Activated CD4-positive, alpha-beta T cell treated with anti-CD3 and anti-CD28 coated beads for 36 hours (primary cell): ENCODE measurements at regions of chr4 and their contacts with region 1.

Region 1: DNA sequence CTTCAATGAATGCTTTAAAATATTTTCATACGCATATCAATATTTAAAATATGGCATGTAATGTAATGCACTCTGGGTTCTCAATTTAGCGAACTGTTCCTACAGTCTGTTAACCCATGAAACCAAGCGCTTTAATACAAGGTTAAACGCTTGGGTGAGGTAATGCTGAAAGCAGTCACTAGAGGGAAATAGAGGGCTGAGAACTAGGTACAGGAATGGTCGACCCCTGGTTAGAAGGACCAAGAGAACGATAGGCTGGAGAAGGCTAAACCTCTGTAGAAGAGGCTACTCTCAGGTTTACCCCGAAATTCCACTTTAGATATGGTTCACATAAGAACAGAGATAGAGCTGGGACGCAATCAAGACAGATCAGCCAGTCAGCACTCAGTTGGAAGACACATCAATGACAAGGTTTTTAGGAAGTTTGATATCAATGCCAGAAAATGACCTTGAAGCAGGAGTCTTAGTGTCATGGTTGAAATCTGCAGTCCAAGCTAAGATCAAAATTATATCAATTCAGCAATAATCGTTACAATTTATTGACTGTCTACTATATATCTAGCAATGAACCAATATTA is 26.9 kb downstream of the ARSJ start:
- DNase-seq: peak; percentile 30
- ATAC-seq: peak; percentile 83
- H3K4me3 Mint-ChIP-seq: no peak overlapping the region
- H3K27ac Mint-ChIP-seq: no peak overlapping the region
- H3K4me1 Mint-ChIP-seq: peaks cover 4% of the 10 kb centered on the region
- H3K27me3 Mint-ChIP-seq: peaks cover 8% of the 10 kb centered on the region

Region 2: GRCh38 chr4:114077610-114078009 is 125.1 kb after region 1 on chr4:
- CTCF ChIA-PET with region 1: interaction called, 15 read pairs
- POLR2A ChIA-PET with region 1: no interaction called
- intact Hi-C with region 1: no loop called
- DNase-seq: no peak
- ATAC-seq: no peak
- H3K4me3 Mint-ChIP-seq: no peak overlapping the region
- H3K27ac Mint-ChIP-seq: no peak overlapping the region
- H3K4me1 Mint-ChIP-seq: no peaks in the 10 kb centered on the region
- H3K27me3 Mint-ChIP-seq: peaks cover 6% of the 10 kb centered on the region

Region 3: GRCh38 chr4:114180481-114180880 is 227.9 kb after region 1 on chr4:
- CTCF ChIA-PET with region 1: interaction called, 3 read pairs
- POLR2A ChIA-PET with region 1: no interaction called
- intact Hi-C with region 1: loop called (anchors 2 to 5 kb)
- DNase-seq: peak; percentile 60
- ATAC-seq: peak; percentile 53
- H3K4me3 Mint-ChIP-seq: no peak overlapping the region
- H3K27ac Mint-ChIP-seq: no peak overlapping the region
- H3K4me1 Mint-ChIP-seq: no peaks in the 10 kb centered on the region
- H3K27me3 Mint-ChIP-seq: peaks cover 3% of the 10 kb centered on the region

Region 4: GRCh38 chr4:114694770-114695169 is 742.2 kb after region 1 on chr4:
- CTCF ChIA-PET with region 1: no interaction called
- POLR2A ChIA-PET with region 1: no interaction called
- intact Hi-C with region 1: loop called in 1 of 2 experiments (anchors 5 kb)
- DNase-seq: no peak
- ATAC-seq: no peak
- H3K4me3 Mint-ChIP-seq: no peak overlapping the region
- H3K27ac Mint-ChIP-seq: no peak overlapping the region
- H3K4me1 Mint-ChIP-seq: no peaks in the 10 kb centered on the region
- H3K27me3 Mint-ChIP-seq: peaks cover 4% of the 10 kb centered on the region